ENCODE measurements at regions of chr5 and their contacts with region 1.

Region 1: GRCh38 chr5:53194086-53194485 is 84.5 kb upstream of the MOCS2 start:
- DNase-seq: no peak
- ATAC-seq: no peak
- H3K4me3 ChIP-seq: no peak overlapping the region
- H3K4me3 Mint-ChIP-seq: no peak overlapping the region
- H3K27ac ChIP-seq: no peak overlapping the region
- H3K27ac Mint-ChIP-seq: no peak overlapping the region
- H3K4me1 ChIP-seq: no peaks in the 10 kb centered on the region
- H3K4me1 Mint-ChIP-seq: no peaks in the 10 kb centered on the region
- H3K27me3 ChIP-seq: peaks cover 0 to 11% of the 10 kb centered on the region in 2 experiments
- H3K27me3 Mint-ChIP-seq: peaks cover 11 to 29% of the 10 kb centered on the region in 2 donors

Region 2: GRCh38 chr5:52620315-52620714 is 573.8 kb before region 1 on chr5:
- CTCF ChIA-PET with region 1: no interaction called
- POLR2A ChIA-PET with region 1: no interaction called
- DNase-seq: no peak
- ATAC-seq: no peak
- H3K4me3 ChIP-seq: no peak overlapping the region
- H3K4me3 Mint-ChIP-seq: no peak overlapping the region
- H3K27ac ChIP-seq: no peak overlapping the region
- H3K27ac Mint-ChIP-seq: no peak overlapping the region
- H3K4me1 ChIP-seq: no peaks in the 10 kb centered on the region
- H3K4me1 Mint-ChIP-seq: no peaks in the 10 kb centered on the region
- H3K27me3 ChIP-seq: no peaks in the 10 kb centered on the region
- H3K27me3 Mint-ChIP-seq: peaks cover 2 to 14% of the 10 kb centered on the region in 2 donors

Region 3: DNA sequence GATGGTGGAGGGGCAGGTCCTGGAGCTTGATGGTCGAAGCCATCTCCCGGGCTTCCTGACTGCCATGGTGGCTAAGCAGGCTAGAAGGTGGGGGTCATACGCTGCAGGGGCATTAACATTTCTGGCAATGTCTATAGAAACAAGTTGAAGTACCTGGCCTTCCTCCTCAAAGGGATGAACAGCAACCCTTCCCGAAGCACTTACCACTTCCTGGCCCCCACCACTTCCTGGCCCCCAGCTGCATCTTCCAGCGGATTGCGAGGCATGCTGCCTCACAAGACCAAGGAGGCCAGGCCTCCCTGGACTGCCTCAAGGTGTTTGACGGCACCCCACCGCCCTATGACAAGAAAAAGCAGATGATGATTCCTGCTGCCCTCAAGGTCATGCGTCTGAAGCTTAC is 12.5 kb after region 1 on chr5:
- CTCF ChIA-PET with region 1: interaction called in 1 of 2 experiments, 10 read pairs
- POLR2A ChIA-PET with region 1: no interaction called
- DNase-seq: no peak
- ATAC-seq: no peak
- H3K4me3 ChIP-seq: no peak overlapping the region
- H3K4me3 Mint-ChIP-seq: no peak overlapping the region
- H3K27ac ChIP-seq: no peak overlapping the region
- H3K27ac Mint-ChIP-seq: no peak overlapping the region
- H3K4me1 ChIP-seq: no peaks in the 10 kb centered on the region
- H3K4me1 Mint-ChIP-seq: no peaks in the 10 kb centered on the region
- H3K27me3 ChIP-seq: peaks cover 0 to 8% of the 10 kb centered on the region in 2 experiments
- H3K27me3 Mint-ChIP-seq: peaks cover 0 to 4% of the 10 kb centered on the region in 2 donors

Region 4: GRCh38 chr5:53249529-53250200 is 55.6 kb after region 1 on chr5:
- CTCF ChIA-PET with region 1: no interaction called
- POLR2A ChIA-PET with region 1: no interaction called
- DNase-seq: no peak
- ATAC-seq: no peak
- H3K4me3 ChIP-seq: no peak overlapping the region
- H3K4me3 Mint-ChIP-seq: no peak overlapping the region
- H3K27ac ChIP-seq: no peak overlapping the region
- H3K27ac Mint-ChIP-seq: no peak overlapping the region
- H3K4me1 ChIP-seq: no peaks in the 10 kb centered on the region
- H3K4me1 Mint-ChIP-seq: peaks cover 0 to 6% (median 0%) of the 10 kb centered on the region in 3 donors
- H3K27me3 ChIP-seq: peaks cover 0 to 6% of the 10 kb centered on the region in 2 experiments
- H3K27me3 Mint-ChIP-seq: peaks cover 5 to 7% of the 10 kb centered on the region in 2 donors

Measured in T-cell (primary cell).